GM23248 (cell line): ENCODE measurements at regions of chr14 and their contacts with region 1.

Region 1: DNA sequence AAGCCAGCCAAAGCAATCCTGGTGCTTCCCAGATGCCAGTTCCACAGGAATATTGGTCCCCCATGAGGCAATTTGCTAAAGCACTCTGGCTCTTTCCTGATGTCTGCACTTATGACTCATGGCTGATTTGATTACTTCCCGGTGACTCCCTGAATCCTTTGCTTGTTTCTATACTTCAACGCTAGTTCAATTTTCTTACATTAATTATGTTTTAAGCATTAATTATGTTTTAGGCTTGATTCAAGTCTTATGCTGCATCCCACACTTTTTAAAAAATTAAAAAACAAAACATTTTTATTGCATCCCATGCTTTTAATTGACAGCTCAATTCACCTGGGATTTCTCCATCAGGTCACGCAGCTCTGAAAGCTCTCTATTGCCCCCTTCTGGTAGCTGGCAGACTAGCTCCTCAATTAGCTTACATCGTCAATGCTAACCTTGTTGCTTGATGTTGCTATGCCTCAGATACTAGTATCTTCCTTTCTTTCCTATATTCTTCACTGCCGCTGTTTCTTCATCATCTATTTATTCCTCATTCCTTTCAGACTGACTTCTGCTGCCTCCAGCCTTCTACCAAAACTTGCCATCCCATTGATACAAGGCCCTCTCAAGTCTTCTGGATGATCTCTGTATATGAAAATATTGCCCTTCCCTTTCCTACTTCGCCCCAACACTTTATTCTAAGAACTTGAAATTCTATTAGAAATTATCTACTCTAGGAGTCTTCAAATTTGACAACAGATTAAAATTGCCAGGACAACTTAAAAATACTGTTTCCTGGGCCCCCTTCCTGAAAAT is 32.0 kb downstream of the TSHR start:
- DNase-seq: peak; percentile 73
- H3K4me3 ChIP-seq: no peak overlapping the region
- H3K27ac ChIP-seq: no peak overlapping the region
- H3K4me1 ChIP-seq: no peaks in the 10 kb centered on the region
- H3K27me3 ChIP-seq: peaks cover 12% of the 10 kb centered on the region; the same call in 1 of the 2 replicates

Region 2: GRCh38 chr14:81464247-81465002 is 477.0 kb after region 1 on chr14:
- in situ Hi-C with region 1: loop called (anchors 25 kb)
- DNase-seq: peak; percentile 62
- H3K4me3 ChIP-seq: peak overlapping the region; percentile 97
- H3K27ac ChIP-seq: no peak overlapping the region
- H3K4me1 ChIP-seq: no peaks in the 10 kb centered on the region
- H3K27me3 ChIP-seq: no peaks in the 10 kb centered on the region; the same call in 1 of the 2 replicates

Region 3: GRCh38 chr14:81669308-81669707 is 681.9 kb after region 1 on chr14:
- in situ Hi-C with region 1: no loop called
- DNase-seq: no peak
- H3K4me3 ChIP-seq: no peak overlapping the region
- H3K27ac ChIP-seq: no peak overlapping the region
- H3K4me1 ChIP-seq: no peaks in the 10 kb centered on the region
- H3K27me3 ChIP-seq: no peaks in the 10 kb centered on the region